ENCODE measurements at regions of chr22 and their contacts with region 1.

Region 1: DNA sequence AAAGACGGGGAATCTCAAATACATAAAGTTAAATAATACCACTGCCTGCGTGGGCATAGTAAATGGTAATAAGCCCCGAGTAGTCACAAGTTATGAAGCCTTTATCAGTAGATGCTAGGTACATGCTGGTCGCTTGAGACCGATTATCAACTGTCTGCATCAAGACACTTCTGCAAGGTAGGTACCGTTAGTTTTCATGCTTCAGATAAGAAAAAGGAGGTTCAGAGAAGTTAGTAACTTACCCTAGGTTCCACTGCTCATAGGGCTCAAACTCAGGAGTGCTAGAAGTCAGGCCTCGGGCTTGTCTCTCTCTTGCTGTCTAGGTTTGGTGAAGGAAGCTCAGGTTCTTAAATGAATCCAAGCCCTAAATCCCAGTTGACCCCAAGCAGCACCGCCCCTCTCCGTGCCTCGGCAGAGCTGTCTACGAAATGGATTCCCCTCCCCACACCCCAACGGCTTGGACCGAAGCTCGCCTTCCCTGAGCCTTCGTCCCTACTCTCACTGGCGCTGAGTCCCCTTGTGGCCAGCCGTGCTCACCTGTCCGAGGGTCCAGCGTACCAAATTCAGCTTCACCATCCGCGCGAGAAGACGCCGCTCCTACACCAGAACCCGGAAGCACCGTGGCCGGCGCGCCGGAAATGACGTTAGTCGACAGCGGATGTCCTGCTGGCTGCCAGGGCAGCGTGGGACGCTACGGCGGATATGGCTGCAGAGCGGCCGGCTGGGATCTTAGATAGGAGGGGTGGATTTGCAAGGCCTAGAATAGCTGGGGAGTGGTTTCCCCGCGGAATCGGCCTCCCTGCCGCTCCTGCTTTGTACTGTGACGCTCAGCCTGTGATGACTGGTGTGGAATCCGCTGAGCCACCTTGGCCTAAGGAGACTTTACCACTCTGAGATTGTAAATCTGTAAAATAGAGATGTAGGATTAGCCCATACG is at the start of gene TFIP11:
- DNase-seq: peak; percentile 93 to 94
- H3K4me3 ChIP-seq: peak within 1 kb of the TSS; percentile 81
- H3K4me3 Mint-ChIP-seq: peak within 1 kb of the TSS; percentile 94
- H3K27ac Mint-ChIP-seq: peak within 1 kb of the TSS; percentile 93
- H3K4me1 ChIP-seq: no peaks in the 10 kb centered on the region; the same call in 1 of the 2 replicates
- H3K4me1 Mint-ChIP-seq: no peaks in the 10 kb centered on the region
- H3K27me3 ChIP-seq: no peaks in the 10 kb centered on the region
- H3K27me3 Mint-ChIP-seq: no peaks in the 10 kb centered on the region
- CTCF ChIP-seq: peak in 1 of 2 experiments; percentile 43
- total RNA-seq, gene TFIP11: 27.4 and 27.7 TPM in 2 replicates

Region 2: GRCh38 chr22:26483439-26484359 is 28.4 kb before region 1 on chr22 and contains the starts of genes HPS4 and SRRD:
- CTCF ChIA-PET with region 1: no interaction called
- POLR2A ChIA-PET with region 1: interaction called, 13 read pairs
- intact Hi-C with region 1: no loop called
- DNase-seq: peak; percentile 89 to 93
- H3K4me3 ChIP-seq: peak within 1 kb of the TSS; percentile 82
- H3K4me3 Mint-ChIP-seq: peak within 1 kb of the TSS; percentile 98
- H3K27ac Mint-ChIP-seq: peak within 1 kb of the TSS; percentile 96
- H3K4me1 ChIP-seq: peaks cover 12% of the 10 kb centered on the region; the same call in 1 of the 2 replicates
- H3K4me1 Mint-ChIP-seq: peaks cover 30% of the 10 kb centered on the region
- H3K27me3 ChIP-seq: no peaks in the 10 kb centered on the region
- H3K27me3 Mint-ChIP-seq: no peaks in the 10 kb centered on the region
- CTCF ChIP-seq: no peak
- total RNA-seq, gene HPS4: 35.1 and 36.6 TPM in 2 replicates
- total RNA-seq, gene SRRD: 19.0 and 21.8 TPM in 2 replicates

Region 3: DNA sequence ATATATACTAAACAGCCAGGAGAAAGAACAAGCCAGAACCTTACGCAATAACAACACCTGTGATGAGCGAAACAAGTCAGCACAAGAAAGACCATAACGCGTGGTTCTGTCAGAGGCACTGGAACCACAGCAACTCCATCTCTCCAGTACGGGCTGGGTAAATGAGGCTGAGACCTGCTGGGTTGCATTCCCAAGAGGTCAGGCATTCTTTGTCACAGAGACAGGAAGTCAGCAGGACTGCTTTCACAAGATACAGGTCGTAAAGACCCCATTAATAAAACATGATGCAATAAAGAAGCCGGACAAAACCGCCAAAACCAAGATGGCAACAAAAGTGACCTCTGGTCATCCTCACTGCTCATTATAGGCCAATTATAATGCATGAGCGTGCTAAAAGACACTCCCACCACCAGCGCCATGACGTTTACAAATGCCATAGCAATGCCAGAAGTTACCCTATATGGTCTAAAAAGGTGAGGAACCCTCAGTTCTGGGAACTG is 56.1 kb after region 1 on chr22:
- CTCF ChIA-PET with region 1: no interaction called
- POLR2A ChIA-PET with region 1: no interaction called
- intact Hi-C with region 1: loop called (anchors 5 kb)
- DNase-seq: peak; percentile 75 to 84
- H3K4me3 ChIP-seq: no peak overlapping the region
- H3K4me3 Mint-ChIP-seq: peak overlapping the region; percentile 34
- H3K27ac Mint-ChIP-seq: peak overlapping the region; percentile 88
- H3K4me1 ChIP-seq: peaks cover 16% of the 10 kb centered on the region
- H3K4me1 Mint-ChIP-seq: peaks cover 8% of the 10 kb centered on the region
- H3K27me3 ChIP-seq: no peaks in the 10 kb centered on the region
- H3K27me3 Mint-ChIP-seq: no peaks in the 10 kb centered on the region
- CTCF ChIP-seq: no peak